ENCODE measurements at regions of chr15 and their contacts with region 1.

Region 1: DNA sequence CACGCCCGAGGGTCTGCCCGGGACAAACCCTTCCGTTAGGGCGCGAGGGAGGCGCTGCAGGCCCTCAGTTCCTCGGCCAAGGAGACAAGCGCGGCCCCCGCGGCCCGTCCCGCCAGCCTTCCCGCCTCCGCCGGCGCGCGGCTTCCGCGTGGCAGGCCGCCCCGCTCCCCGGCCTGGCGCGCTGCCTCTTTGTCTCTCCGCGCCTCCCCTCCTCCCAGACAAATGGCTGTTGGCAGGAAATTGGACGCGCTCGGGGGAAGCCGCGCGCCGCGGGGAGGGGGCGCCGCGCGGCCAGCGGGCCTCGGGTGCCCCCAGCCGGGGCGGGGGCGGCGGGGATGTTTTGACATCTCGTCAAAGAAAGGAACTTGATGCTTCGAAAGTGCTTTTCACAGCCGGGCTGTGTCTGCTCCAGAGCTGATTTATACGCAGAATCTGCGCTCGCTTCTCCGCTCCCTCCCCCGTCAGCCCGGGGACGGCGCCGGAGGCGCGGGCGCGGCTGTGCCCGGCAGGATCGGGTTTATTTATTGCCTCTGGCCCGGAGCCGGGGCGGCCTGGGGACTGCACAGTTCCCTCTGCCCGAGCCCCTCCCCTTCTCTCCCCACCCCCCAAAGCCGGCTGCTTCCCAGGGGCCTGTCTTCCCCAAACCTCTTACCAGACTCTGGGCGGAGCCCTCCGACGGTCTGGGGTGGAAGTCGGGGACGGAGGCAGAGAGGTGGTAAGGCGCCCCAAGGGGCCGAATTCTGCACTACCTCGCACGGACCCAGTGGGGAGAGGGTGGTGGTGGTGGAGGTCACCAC is 20.7 kb downstream of the SHF start:
- DNase-seq: peak; percentile 84
- H3K4me3 Mint-ChIP-seq: peak overlapping the region; percentile 69
- H3K27ac Mint-ChIP-seq: peak overlapping the region; percentile 84
- H3K4me1 Mint-ChIP-seq: peaks cover 20% of the 10 kb centered on the region
- H3K27me3 Mint-ChIP-seq: no peaks in the 10 kb centered on the region

Region 2: DNA sequence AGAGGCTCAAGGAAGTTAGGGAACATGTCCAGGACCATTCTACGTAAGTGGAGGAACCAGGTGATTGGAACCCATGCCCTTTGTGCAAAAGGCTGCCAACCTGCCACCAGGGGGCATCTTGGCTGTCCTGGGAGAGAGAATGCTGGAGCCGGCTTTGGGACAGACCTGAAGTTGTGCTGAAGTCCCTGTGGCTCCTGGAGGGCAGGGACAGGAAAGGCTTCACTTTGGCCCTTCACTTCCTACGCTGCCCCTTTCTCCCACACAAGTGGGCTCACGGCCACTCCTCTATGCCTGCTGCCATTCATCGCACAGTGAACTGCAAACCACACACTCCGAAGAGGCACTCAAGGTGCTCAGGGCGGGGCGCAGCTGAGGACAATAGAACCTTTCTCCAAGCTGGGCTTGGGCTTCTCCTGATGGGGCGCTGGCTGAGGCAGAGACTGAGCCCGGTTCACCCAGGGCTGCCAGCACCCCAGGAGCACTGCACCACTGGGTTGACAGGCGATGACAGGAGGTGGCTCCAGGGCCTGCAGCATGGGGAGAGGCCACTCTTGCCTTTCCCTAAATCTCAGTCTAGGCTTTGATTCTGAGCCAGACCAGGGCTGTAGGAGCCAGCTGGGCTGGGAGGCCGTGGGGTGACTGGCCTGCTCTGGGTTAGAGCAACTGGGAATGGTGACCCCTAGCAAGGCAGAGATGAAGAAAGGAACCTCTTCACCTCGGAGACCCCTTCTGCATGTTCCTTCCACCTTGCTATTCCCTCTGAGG is 12.4 kb after region 1 on chr15:
- CTCF ChIA-PET with region 1: interaction called, 111 read pairs
- POLR2A ChIA-PET with region 1: no interaction called
- DNase-seq: peak; percentile 33
- H3K4me3 Mint-ChIP-seq: no peak overlapping the region
- H3K27ac Mint-ChIP-seq: no peak overlapping the region
- H3K4me1 Mint-ChIP-seq: peaks cover 10% of the 10 kb centered on the region
- H3K27me3 Mint-ChIP-seq: no peaks in the 10 kb centered on the region

Region 3: GRCh38 chr15:45187894-45188830 is 21.1 kb after region 1 on chr15 and contains the start of gene SHF:
- CTCF ChIA-PET with region 1: interaction called, 111 read pairs
- POLR2A ChIA-PET with region 1: no interaction called
- DNase-seq: peak; percentile 39
- H3K4me3 Mint-ChIP-seq: peak within 1 kb of the TSS; percentile 74
- H3K27ac Mint-ChIP-seq: peak within 1 kb of the TSS; percentile 73
- H3K4me1 Mint-ChIP-seq: peaks cover 12% of the 10 kb centered on the region
- H3K27me3 Mint-ChIP-seq: peaks cover 22% of the 10 kb centered on the region
- total RNA-seq, gene SHF: 0.79 to 0.92 TPM

Region 4: GRCh38 chr15:45198337-45199135 is 31.5 kb after region 1 on chr15:
- CTCF ChIA-PET with region 1: interaction called, 13 read pairs
- POLR2A ChIA-PET with region 1: interaction called, 3 read pairs
- DNase-seq: peak; percentile 95
- H3K4me3 Mint-ChIP-seq: no peak overlapping the region
- H3K27ac Mint-ChIP-seq: no peak overlapping the region
- H3K4me1 Mint-ChIP-seq: peaks cover 20% of the 10 kb centered on the region
- H3K27me3 Mint-ChIP-seq: peaks cover 2% of the 10 kb centered on the region

Region 5: GRCh38 chr15:45205192-45205591 is 38.2 kb after region 1 on chr15:
- CTCF ChIA-PET with region 1: interaction called, 13 read pairs
- POLR2A ChIA-PET with region 1: no interaction called
- DNase-seq: peak; percentile 77
- H3K4me3 Mint-ChIP-seq: no peak overlapping the region
- H3K27ac Mint-ChIP-seq: no peak overlapping the region
- H3K4me1 Mint-ChIP-seq: peaks cover 8% of the 10 kb centered on the region
- H3K27me3 Mint-ChIP-seq: peaks cover 16% of the 10 kb centered on the region

Region 6: GRCh38 chr15:45522328-45523160 is 355.5 kb after region 1 on chr15 and contains the start of gene SLC30A4:
- CTCF ChIA-PET with region 1: no interaction called
- POLR2A ChIA-PET with region 1: no interaction called
- DNase-seq: peak; percentile 62
- H3K4me3 Mint-ChIP-seq: peak within 1 kb of the TSS; percentile 86
- H3K27ac Mint-ChIP-seq: peak within 1 kb of the TSS; percentile 85
- H3K4me1 Mint-ChIP-seq: peaks cover 22% of the 10 kb centered on the region
- H3K27me3 Mint-ChIP-seq: peaks cover 26% of the 10 kb centered on the region
- total RNA-seq, gene SLC30A4: 3.5 to 4.3 TPM